Ovary (tissue), 10 donors: ENCODE measurements at regions of chr15 and their contacts with region 1.

Region 1: DNA sequence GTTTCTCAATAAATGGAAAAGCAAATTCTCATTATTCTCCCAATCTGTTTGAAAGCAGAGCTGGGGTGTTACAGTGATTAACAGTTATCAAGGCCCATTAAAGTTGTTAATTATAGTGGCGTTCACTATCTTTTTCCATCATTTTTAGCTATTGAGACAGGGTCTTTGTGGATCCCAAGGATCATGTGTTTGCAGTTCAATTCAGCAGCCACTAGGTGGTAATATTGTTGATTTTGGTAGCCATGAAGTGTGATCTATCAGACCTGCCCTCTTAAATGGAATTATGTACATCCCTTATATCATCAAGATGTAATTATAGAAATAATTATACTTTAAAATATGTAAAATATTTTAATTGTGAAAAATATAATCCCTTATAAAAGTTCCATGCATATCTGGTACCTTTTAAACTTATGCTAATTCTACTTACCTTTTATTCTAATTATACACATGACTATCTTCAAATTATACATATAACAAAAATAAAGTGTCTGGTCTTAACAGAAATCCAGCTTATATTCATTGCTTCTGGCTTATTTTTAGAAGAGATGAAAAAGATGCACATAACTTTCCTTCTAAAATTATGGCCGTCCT is 126.4 kb downstream of the GREM1 start:
- DNase-seq: no peak
- H3K4me3 ChIP-seq: no peak overlapping the region
- H3K27ac ChIP-seq: no peak overlapping the region
- H3K4me1 ChIP-seq: no peaks in the 10 kb centered on the region
- H3K27me3 ChIP-seq: no peaks in the 10 kb centered on the region
- CTCF ChIP-seq: peak in 1 of 3 donors; percentile 13
- EP300 ChIP-seq: no peak
- POLR2A ChIP-seq: no peak

Region 2: GRCh38 chr15:32899126-32899596 is 54.9 kb after region 1 on chr15:
- intact Hi-C with region 1: loop called in 1 of 4 experiments (anchors 10 kb)
- DNase-seq: no peak
- H3K4me3 ChIP-seq: no peak overlapping the region
- H3K27ac ChIP-seq: no peak overlapping the region
- H3K4me1 ChIP-seq: no peaks in the 10 kb centered on the region
- H3K27me3 ChIP-seq: no peaks in the 10 kb centered on the region
- CTCF ChIP-seq: no peak
- EP300 ChIP-seq: no peak
- POLR2A ChIP-seq: no peak

Region 3: DNA sequence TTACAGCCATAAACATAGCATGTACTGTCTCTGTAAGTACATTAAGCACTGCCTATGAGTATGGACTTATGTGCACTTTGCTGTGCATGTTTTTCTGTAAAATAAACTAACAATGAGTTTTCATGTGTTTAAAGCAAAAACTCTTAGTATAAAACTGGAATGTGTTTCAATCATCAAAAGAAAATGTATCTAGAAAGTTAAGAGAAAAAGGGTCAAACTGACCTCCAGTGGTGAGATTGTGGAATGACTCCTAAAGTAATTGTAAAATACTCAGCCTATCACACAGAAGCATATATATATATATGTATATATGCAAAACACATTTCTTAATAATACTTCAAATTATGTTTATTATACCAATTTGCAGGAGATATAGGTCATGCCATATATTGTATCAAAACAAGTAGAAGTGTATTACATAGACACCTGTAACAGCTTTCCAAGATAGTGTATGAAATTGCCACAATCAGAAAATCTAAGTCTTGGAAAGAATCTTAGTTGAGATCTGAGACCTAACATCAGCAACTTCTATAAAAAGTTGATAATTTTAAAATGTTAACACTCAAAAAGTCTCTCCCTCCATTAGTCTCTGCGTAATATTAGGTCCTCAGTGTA is 150.7 kb after region 1 on chr15:
- intact Hi-C with region 1: loop called in 1 of 4 experiments (anchors 10 kb)
- DNase-seq: no peak
- H3K4me3 ChIP-seq: no peak overlapping the region
- H3K27ac ChIP-seq: no peak overlapping the region
- H3K4me1 ChIP-seq: no peaks in the 10 kb centered on the region
- H3K27me3 ChIP-seq: no peaks in the 10 kb centered on the region
- CTCF ChIP-seq: peak in 1 of 3 donors; percentile 17
- EP300 ChIP-seq: no peak
- POLR2A ChIP-seq: no peak